ENCODE measurements at regions of chr17 and their contacts with region 1.

Region 1: DNA sequence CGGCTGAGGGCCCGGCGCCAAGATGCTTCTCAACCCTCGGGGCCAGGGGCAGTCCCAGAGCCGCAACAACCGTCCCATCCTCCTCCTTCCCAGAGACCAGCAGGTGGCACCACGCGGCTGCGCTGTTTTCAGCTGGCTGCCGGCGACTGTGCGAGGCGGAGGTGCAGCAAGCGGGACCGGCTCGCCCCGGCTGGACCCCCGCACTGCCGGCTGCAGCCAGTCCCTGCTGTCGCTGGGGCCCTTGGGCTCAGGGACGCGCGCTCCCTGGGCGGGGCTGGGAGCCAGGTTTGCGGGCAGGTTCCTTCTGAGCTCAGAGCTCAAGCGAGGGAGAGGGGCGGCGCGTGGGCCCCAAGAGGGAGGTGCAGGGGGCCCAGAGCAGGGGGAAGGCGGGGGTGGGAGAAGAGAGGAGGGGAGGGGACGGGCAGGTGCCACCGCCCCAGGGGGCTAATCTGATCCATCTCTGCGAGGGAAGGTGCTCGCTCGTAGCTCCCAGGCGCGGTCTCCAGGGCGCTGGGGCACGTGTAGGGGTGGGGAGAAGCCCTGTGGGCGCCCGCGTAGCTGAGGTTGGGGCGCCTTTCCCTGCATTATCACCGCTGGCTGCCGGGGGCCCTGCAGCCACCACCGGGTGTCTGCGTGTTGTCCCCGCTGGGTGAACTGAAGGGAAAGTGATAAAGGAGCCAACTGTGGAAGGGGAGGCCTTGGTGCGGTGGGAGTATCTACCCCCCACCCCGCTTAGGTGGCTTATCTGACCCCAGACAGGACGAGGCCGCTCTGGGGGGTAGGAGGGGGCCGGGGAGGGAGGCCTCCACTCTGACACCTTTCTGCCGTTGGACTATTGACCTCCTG is 24.2 kb downstream of the STAT5A start:
- DNase-seq: peak; percentile 86 to 91
- H3K4me3 ChIP-seq: peak overlapping the region in 2 of 3 donors; percentile 18 to 54
- H3K27ac ChIP-seq: peak overlapping the region; percentile 80 to 82
- H3K4me1 ChIP-seq: peaks cover 11 to 13% of the 10 kb centered on the region in 2 donors
- H3K27me3 ChIP-seq: no peaks in the 10 kb centered on the region
- CTCF ChIP-seq: peak in 2 of 3 donors; percentile 61 to 65
- POLR2A ChIP-seq: no peak

Region 2: GRCh38 chr17:40559954-40560591 is 1752.4 kb before region 1 on chr17:
- intact Hi-C with region 1: loop called (anchors 10 kb)
- DNase-seq: peak; percentile 95
- H3K4me3 ChIP-seq: peak overlapping the region; percentile 1 to 61 (median 10)
- H3K27ac ChIP-seq: peak overlapping the region; percentile 97
- H3K4me1 ChIP-seq: peaks cover 8 to 21% of the 10 kb centered on the region in 2 donors
- H3K27me3 ChIP-seq: no peaks in the 10 kb centered on the region
- CTCF ChIP-seq: peak; percentile 95 to 100 (median 99)
- POLR2A ChIP-seq: no peak

Region 3: DNA sequence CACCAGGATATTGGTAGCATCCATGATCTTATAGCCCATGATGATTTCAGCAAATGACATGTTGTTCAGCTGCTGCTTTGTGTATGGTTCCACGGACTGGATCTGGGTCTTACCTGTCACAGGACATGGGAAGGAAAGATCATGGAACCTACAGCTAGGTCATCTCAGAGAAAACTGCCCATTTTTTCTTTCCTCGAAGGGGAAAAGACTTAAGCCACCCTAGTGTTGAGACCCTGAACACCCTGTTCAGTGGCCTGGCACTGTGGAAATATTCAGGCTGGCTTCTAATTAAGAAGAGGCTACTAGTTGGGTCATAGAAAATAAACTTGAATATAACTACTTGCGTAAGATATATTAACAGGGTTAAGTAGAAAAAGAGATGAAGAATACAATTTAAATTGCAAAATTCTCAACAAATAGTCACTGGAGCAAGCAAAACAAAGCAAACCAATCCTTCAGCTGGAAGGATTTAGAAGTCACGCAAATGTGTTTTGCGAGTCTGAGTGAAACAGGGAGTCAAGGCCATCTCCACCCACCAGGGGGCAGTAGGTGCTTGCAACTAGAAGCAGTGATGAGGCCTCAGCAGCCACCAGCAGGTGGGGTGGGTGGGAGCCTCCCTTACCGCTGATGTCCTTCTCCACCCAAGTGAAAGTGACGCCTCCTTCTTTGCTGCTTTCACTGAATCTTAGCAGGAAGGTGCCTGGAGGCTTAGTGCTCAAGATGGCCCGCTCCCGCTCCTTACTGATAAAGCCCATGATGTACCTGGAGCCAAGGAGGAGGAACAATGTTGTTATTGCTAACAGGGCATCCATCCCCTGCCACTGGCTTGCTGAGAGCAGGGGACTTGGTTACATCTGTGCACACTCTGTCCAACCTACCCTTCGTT is 10.1 kb after region 1 on chr17:
- intact Hi-C with region 1: no loop called
- DNase-seq: peak; percentile 93 to 95
- H3K4me3 ChIP-seq: no peak overlapping the region
- H3K27ac ChIP-seq: peak overlapping the region; percentile 59 to 70
- H3K4me1 ChIP-seq: peaks cover 0 to 5% of the 10 kb centered on the region in 2 donors
- H3K27me3 ChIP-seq: no peaks in the 10 kb centered on the region
- CTCF ChIP-seq: peak; percentile 99 to 100 (median 100)
- POLR2A ChIP-seq: no peak

Region 4: DNA sequence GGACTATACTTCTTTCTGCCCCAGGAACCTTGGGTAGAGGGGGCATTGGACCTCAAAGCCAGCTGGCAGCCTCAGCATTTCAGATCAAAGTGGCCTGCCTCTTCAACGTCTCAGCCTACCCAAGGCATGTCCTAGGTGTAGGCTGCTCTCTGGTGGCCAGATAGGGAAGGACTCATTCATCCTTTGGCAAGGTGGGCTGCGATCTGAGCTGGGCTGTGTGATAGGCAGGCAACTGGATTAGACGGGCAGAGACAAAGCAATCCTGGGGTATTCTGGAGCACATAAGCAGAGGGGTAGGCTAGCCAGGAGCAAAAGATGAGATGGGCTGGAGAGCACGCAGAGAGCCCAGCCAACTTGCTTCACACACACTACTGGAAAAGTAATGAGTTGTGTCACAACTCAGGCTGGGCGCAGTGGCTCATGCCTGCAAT is 214.8 kb after region 1 on chr17:
- intact Hi-C with region 1: loop called (anchors 5 kb)
- DNase-seq: peak in 1 of 2 donors; percentile 68
- H3K4me3 ChIP-seq: no peak overlapping the region
- H3K27ac ChIP-seq: peak overlapping the region; percentile 6 to 34
- H3K4me1 ChIP-seq: peaks cover 0 to 7% of the 10 kb centered on the region in 2 donors
- H3K27me3 ChIP-seq: no peaks in the 10 kb centered on the region
- CTCF ChIP-seq: peak; percentile 66 to 92 (median 82)
- POLR2A ChIP-seq: no peak